Spleen (tissue), 13 donors: ENCODE measurements at regions of chr12 and their contacts with region 1.

Region 1: GRCh38 chr12:45729233-45730083 is at the start of gene ARID2:
- DNase-seq: peak; percentile 94
- H3K4me3 ChIP-seq: peak within 1 kb of the TSS; percentile 61 to 89 (median 75)
- H3K27ac ChIP-seq: peak within 1 kb of the TSS; percentile 94 to 100 (median 99)
- H3K4me1 ChIP-seq: peaks cover 35 to 64% (median 52%) of the 10 kb centered on the region in 6 donors
- H3K27me3 ChIP-seq: no peaks in the 10 kb centered on the region
- CTCF ChIP-seq: no peak
- POLR2A ChIP-seq: no peak
- total RNA-seq, gene ARID2: 31.7 to 59.6 (median 44.2) TPM

Region 2: DNA sequence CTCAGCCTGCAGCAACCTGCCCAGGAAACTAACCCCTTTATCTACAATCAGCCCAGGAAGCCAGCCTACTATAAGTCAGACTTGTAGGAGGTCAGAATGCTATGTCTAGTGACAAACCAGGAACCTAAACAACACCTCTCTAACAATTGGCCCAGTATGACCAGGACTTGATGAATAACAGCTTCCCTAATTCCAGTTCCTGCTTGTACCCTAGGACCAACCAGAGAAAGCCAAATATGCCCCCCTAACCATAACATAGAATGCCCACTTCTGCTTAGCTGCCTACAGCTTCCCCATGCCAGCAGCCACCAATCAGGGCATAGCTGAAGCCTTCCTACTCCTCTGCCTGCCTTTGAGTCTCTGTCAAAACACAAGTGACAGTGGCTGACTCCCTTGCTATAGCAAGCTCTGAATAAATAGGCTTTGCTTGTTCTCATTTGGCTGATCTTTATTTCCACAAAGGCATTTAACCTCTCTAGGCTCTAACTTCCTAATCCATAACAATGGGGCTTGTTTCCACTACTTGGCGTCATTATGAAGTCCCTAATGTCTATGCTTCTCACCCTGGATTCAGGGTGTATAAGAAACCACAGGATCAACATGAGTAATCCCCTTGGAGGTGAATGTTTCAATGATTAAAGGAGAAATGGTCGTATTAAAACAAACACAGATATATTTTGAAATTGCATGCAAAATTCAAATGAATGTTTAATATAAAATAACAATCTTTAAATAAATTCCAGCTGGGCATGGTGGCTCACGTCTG is 293.3 kb before region 1 on chr12:
- intact Hi-C with region 1: no loop called
- DNase-seq: no peak
- H3K4me3 ChIP-seq: no peak overlapping the region
- H3K27ac ChIP-seq: peak overlapping the region in 3 of 8 donors; percentile 2 to 30 (median 10)
- H3K4me1 ChIP-seq: peaks cover 0 to 4% (median 0%) of the 10 kb centered on the region in 6 donors
- H3K27me3 ChIP-seq: no peaks in the 10 kb centered on the region
- CTCF ChIP-seq: no peak
- POLR2A ChIP-seq: no peak

Region 3: GRCh38 chr12:45989721-45990467 is 260.4 kb after region 1 on chr12:
- intact Hi-C with region 1: loop called (anchors 10 kb)
- DNase-seq: peak; percentile 93
- H3K4me3 ChIP-seq: peak overlapping the region; percentile 62 to 82 (median 72)
- H3K27ac ChIP-seq: peak overlapping the region; percentile 96 to 100 (median 99)
- H3K4me1 ChIP-seq: peaks cover 41 to 66% (median 51%) of the 10 kb centered on the region in 6 donors
- H3K27me3 ChIP-seq: no peaks in the 10 kb centered on the region
- CTCF ChIP-seq: no peak
- POLR2A ChIP-seq: peak in 1 of 3 donors; percentile 54